H1 (cell line): ENCODE measurements at regions of chr7 and their contacts with region 1.

Region 1: DNA sequence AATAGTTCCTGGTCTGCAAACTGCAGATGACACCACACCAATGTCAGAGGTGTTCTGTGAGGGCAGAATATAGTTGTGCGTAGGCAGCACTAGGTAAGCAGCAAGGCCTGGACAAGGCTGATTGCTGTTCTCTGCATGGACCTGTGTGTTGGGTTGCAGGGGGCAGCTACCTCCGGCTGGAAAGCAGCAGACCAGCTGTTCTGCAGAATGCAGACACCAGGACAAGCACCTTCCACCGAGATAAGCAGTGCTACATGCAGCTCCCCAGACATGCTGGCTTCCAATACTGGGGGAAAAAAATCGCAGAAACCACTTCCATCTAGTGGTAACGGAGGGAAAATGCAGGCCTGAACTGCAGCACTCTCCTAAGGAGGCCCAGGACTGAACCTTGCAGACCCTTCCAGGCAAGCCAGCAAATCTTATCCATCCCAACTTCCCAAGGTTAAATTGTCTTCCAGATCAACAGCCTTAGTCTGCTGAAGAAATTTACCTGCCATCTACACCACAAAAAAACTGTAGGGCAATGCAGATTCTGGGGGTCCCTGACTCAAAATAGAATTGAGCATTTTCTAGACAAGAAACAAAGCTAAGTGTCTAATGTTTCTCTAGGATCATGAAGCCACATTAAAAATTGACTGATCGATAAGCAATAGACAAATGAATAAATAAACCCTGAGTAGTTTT is 50.5 kb upstream of the COBL start:
- DNase-seq: peak; percentile 51 to 63
- H3K4me3 ChIP-seq: no peak overlapping the region
- H3K27ac ChIP-seq: no peak overlapping the region
- H3K4me1 ChIP-seq: peaks cover 7 to 15% (median 10%) of the 10 kb centered on the region in 4 experiments
- H3K27me3 ChIP-seq: no peaks in the 10 kb centered on the region
- CTCF ChIP-seq: peak; percentile 76 to 95 (median 89)
- EP300 ChIP-seq: no peak
- POLR2A ChIP-seq: no peak
- RAD21 ChIP-seq: peak; percentile 93 to 97

Region 2: GRCh38 chr7:51154201-51154600 is 212.9 kb before region 1 on chr7:
- CTCF ChIA-PET with region 1: interaction called, 155 read pairs
- POLR2A ChIA-PET with region 1: no interaction called
- DNase-seq: no peak
- H3K4me3 ChIP-seq: no peak overlapping the region
- H3K27ac ChIP-seq: no peak overlapping the region
- H3K4me1 ChIP-seq: peaks cover 0 to 3% (median 0%) of the 10 kb centered on the region in 4 experiments; a peak in 3 of 7 replicates
- H3K27me3 ChIP-seq: no peaks in the 10 kb centered on the region
- CTCF ChIP-seq: no peak
- EP300 ChIP-seq: no peak
- POLR2A ChIP-seq: no peak
- RAD21 ChIP-seq: no peak

Region 3: GRCh38 chr7:51224811-51225612 is 142.1 kb before region 1 on chr7:
- CTCF ChIA-PET with region 1: interaction called, 176 read pairs
- POLR2A ChIA-PET with region 1: no interaction called
- DNase-seq: peak; percentile 31 to 50
- H3K4me3 ChIP-seq: no peak overlapping the region
- H3K27ac ChIP-seq: no peak overlapping the region
- H3K4me1 ChIP-seq: peaks cover 5 to 16% (median 10%) of the 10 kb centered on the region in 4 experiments; a peak in 6 of 7 replicates
- H3K27me3 ChIP-seq: no peaks in the 10 kb centered on the region; a peak in 1 of 7 replicates
- CTCF ChIP-seq: peak; percentile 61 to 86 (median 72)
- EP300 ChIP-seq: no peak
- POLR2A ChIP-seq: no peak
- RAD21 ChIP-seq: peak; percentile 67 to 79

Region 4: GRCh38 chr7:51299391-51300133 is 67.5 kb before region 1 on chr7:
- CTCF ChIA-PET with region 1: interaction called, 92 read pairs
- POLR2A ChIA-PET with region 1: no interaction called
- DNase-seq: no peak
- H3K4me3 ChIP-seq: no peak overlapping the region
- H3K27ac ChIP-seq: no peak overlapping the region
- H3K4me1 ChIP-seq: peaks cover 0 to 6% (median 5%) of the 10 kb centered on the region in 4 experiments; a peak in 3 of 7 replicates
- H3K27me3 ChIP-seq: no peaks in the 10 kb centered on the region
- CTCF ChIP-seq: peak in 2 of 3 experiments; percentile 6 to 38; a peak in 2 of 4 replicates
- EP300 ChIP-seq: no peak
- POLR2A ChIP-seq: no peak
- RAD21 ChIP-seq: peak; percentile 4 to 12; a peak in 1 of 4 replicates

Region 5: DNA sequence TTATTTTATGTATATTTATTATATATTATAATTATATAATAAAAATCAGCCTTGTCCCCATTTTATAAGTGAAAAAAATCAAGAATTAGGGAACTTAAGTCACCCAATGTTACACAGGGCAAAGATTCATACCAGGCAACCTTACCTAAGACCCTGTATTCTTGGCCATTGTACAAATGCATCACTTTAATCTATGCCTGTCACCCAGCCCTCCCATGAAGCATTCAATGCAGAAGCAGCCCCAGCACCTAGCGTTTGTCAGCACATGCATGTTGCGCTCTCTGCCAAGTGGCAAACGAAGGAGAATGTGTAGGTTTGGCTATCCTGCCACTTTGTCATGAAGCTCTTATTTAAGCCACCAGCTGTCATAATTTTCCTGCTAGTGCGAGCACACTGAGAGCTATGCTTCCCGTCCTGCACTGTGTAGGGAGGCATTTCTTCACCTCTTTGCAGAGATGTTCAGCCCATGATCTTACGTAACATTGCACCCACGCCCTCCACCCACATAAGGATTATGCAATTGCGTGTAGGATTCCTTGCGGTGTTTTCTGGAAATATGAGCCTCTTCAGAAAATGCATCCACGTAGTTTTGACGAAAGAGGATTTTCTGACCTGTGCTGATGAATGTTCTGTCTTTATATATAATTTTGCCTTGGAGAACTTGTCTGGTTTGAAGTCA is 42.7 kb before region 1 on chr7:
- CTCF ChIA-PET with region 1: interaction called, 23 read pairs
- POLR2A ChIA-PET with region 1: interaction called, 14 read pairs
- DNase-seq: peak in 1 of 2 experiments; percentile 37
- H3K4me3 ChIP-seq: no peak overlapping the region
- H3K27ac ChIP-seq: no peak overlapping the region
- H3K4me1 ChIP-seq: peaks cover 17 to 40% (median 32%) of the 10 kb centered on the region in 4 experiments
- H3K27me3 ChIP-seq: peaks cover 0 to 3% (median 0%) of the 10 kb centered on the region in 4 experiments; a peak in 1 of 7 replicates
- CTCF ChIP-seq: no peak
- EP300 ChIP-seq: no peak
- POLR2A ChIP-seq: no peak
- RAD21 ChIP-seq: no peak

Region 6: DNA sequence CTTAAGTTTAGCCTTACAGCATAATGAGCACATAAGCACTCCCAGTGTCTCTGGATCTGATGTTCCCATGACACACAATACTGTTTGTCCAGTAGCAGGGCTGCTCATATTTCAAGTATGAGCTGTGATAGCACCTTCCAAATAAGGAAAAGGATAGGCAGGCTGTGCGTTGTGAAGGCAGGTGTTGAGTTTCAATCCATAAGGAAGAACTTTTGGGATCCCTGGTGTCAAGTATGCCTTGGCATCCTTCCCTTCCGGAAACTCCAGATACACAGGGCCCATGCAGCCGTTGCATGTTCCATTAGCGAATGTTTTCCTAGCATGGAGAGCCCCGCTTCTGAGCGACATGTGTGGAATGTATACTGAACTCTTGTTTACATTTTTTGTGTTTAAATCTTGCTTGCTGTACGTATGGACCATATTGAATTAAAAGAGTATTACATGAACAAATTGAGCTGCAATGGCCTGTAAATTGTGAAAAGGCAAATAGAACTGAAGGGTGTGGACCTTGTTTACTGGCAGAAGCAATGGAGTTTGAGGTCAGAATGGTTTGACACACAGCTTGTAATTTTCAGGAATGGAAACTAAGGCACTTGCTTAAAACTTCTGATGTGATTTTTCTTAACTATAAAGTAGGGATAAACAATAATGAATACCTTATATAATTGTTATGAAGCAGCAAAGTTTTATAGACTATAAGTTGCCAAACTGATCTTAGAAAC is 16.7 kb before region 1 on chr7:
- CTCF ChIA-PET with region 1: interaction called, 109 read pairs
- POLR2A ChIA-PET with region 1: no interaction called
- DNase-seq: no peak
- H3K4me3 ChIP-seq: no peak overlapping the region
- H3K27ac ChIP-seq: no peak overlapping the region
- H3K4me1 ChIP-seq: peaks cover 0 to 3% (median 0%) of the 10 kb centered on the region in 4 experiments; a peak in 2 of 7 replicates
- H3K27me3 ChIP-seq: no peaks in the 10 kb centered on the region; a peak in 1 of 7 replicates
- CTCF ChIP-seq: no peak
- EP300 ChIP-seq: no peak
- POLR2A ChIP-seq: no peak
- RAD21 ChIP-seq: no peak

Region 7: DNA sequence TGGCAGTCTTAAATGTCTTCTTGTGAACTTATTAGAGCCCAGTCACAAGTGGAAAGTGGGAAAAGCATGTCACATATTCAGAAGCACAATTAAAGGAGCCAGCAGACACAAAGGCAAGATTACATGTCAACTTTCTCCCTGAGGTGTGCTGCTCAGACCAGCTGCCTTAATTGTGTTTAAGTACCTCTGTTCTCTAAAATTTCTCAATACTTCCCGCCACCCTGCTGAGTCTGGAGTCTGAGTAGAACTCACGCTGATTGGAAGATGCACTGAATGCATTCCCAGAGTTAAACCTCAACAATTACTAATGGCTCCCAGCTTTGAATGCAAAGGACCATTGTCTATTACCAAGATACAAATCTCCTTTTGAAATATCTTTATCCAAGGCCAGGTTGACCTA is 115.9 kb after region 1 on chr7:
- CTCF ChIA-PET with region 1: no interaction called
- POLR2A ChIA-PET with region 1: no interaction called
- DNase-seq: no peak
- H3K4me3 ChIP-seq: no peak overlapping the region
- H3K27ac ChIP-seq: no peak overlapping the region
- H3K4me1 ChIP-seq: no peaks in the 10 kb centered on the region; a peak in 2 of 7 replicates
- H3K27me3 ChIP-seq: no peaks in the 10 kb centered on the region
- CTCF ChIP-seq: no peak
- EP300 ChIP-seq: no peak
- POLR2A ChIP-seq: no peak
- RAD21 ChIP-seq: no peak

Region 8: GRCh38 chr7:51517187-51517586 is 150.1 kb after region 1 on chr7:
- CTCF ChIA-PET with region 1: no interaction called
- POLR2A ChIA-PET with region 1: no interaction called
- DNase-seq: no peak
- H3K4me3 ChIP-seq: no peak overlapping the region
- H3K27ac ChIP-seq: no peak overlapping the region
- H3K4me1 ChIP-seq: no peaks in the 10 kb centered on the region; a peak in 1 of 7 replicates
- H3K27me3 ChIP-seq: no peaks in the 10 kb centered on the region
- CTCF ChIP-seq: no peak
- EP300 ChIP-seq: no peak
- POLR2A ChIP-seq: no peak
- RAD21 ChIP-seq: no peak